CD8-positive, alpha-beta T cell (primary cell): ENCODE measurements at regions of chr5 and their contacts with region 1.

Region 1: GRCh38 chr5:27511061-27511460 is 472.7 kb upstream of the CDH9 start:
- DNase-seq: no peak
- ATAC-seq: no peak
- H3K4me3 ChIP-seq: no peak overlapping the region
- H3K4me3 Mint-ChIP-seq: no peak overlapping the region
- H3K27ac ChIP-seq: no peak overlapping the region
- H3K27ac Mint-ChIP-seq: no peak overlapping the region
- H3K4me1 ChIP-seq: no peaks in the 10 kb centered on the region
- H3K4me1 Mint-ChIP-seq: no peaks in the 10 kb centered on the region
- H3K27me3 ChIP-seq: no peaks in the 10 kb centered on the region
- H3K27me3 Mint-ChIP-seq: no peaks in the 10 kb centered on the region
- CTCF ChIP-seq: no peak

Region 2: GRCh38 chr5:27472000-27472763 is 38.9 kb before region 1 on chr5:
- CTCF ChIA-PET with region 1: no interaction called
- POLR2A ChIA-PET with region 1: no interaction called
- intact Hi-C with region 1: loop called in 1 of 2 experiments (anchors 1 kb)
- DNase-seq: no peak
- ATAC-seq: no peak
- H3K4me3 ChIP-seq: no peak overlapping the region
- H3K4me3 Mint-ChIP-seq: no peak overlapping the region
- H3K27ac ChIP-seq: no peak overlapping the region
- H3K27ac Mint-ChIP-seq: no peak overlapping the region
- H3K4me1 ChIP-seq: no peaks in the 10 kb centered on the region
- H3K4me1 Mint-ChIP-seq: no peaks in the 10 kb centered on the region
- H3K27me3 ChIP-seq: no peaks in the 10 kb centered on the region
- H3K27me3 Mint-ChIP-seq: no peaks in the 10 kb centered on the region
- CTCF ChIP-seq: no peak

Region 3: DNA sequence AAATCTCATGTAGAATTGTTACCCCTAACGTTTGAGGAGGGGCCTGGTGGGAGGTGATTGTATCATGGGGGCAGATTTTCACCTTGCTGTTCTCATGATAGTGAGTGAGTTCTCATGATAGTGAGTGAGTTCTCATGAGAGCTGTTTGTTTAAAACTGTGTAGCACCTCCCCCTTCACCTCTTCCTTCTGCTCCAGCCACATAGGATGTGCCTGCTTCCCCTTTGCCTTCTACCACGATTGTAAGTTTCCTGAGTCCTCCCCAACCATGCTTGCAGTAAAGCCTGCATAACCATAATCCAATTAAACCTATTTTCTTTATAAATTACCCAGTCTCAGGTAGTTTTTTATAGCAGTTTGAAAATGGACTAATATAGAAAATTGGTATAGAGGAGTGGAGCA is 1311.0 kb after region 1 on chr5:
- CTCF ChIA-PET with region 1: no interaction called
- POLR2A ChIA-PET with region 1: no interaction called
- intact Hi-C with region 1: no loop called
- DNase-seq: no peak
- ATAC-seq: no peak
- H3K4me3 ChIP-seq: no peak overlapping the region
- H3K4me3 Mint-ChIP-seq: no peak overlapping the region
- H3K27ac ChIP-seq: no peak overlapping the region
- H3K27ac Mint-ChIP-seq: no peak overlapping the region
- H3K4me1 ChIP-seq: no peaks in the 10 kb centered on the region
- H3K4me1 Mint-ChIP-seq: no peaks in the 10 kb centered on the region
- H3K27me3 ChIP-seq: no peaks in the 10 kb centered on the region
- H3K27me3 Mint-ChIP-seq: no peaks in the 10 kb centered on the region
- CTCF ChIP-seq: no peak